ENCODE measurements at regions of chr2 and their contacts with region 1.

Region 1: DNA sequence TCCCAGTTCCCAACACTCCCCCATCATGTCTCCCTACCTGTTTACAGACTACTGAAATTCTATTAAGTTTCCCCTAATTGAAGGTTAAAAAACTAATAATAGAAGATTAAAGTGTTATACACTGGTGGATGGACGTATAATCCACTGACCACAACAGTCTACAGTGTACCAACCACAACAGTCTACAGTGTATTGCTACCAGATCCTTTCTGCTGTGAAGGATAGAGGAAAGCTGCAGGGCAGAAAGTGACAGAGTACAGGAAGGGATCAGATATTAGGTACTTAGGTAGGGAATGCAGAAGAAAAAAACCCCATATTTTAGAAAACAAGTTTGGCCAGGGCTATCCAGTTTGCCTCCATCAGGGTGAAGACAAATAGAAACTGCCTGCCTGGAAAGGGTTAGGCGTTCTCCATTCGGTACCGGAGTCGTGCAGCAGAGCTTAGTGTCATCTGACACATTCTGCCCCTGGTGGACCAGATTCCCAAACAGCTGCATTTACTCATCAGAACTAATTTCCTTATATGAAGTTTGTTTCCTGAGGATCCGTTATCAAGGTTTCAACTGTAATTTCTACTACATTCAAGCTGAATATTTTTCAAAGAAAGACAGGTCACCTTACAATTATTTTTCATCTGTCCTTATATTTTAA is 49.9 kb downstream of the KLF7 start:
- DNase-seq: no peak
- ATAC-seq: no peak
- H3K4me3 ChIP-seq: no peak overlapping the region
- H3K4me3 Mint-ChIP-seq: no peak overlapping the region
- H3K27ac ChIP-seq: no peak overlapping the region
- H3K27ac Mint-ChIP-seq: no peak overlapping the region
- H3K4me1 ChIP-seq: peaks cover 0 to 7% of the 10 kb centered on the region in 2 donors
- H3K4me1 Mint-ChIP-seq: peaks cover 15 to 88% (median 56%) of the 10 kb centered on the region in 7 donors
- H3K27me3 ChIP-seq: no peaks in the 10 kb centered on the region
- H3K27me3 Mint-ChIP-seq: no peaks in the 10 kb centered on the region

Region 2: GRCh38 chr2:206840999-206841398 is 274.8 kb before region 1 on chr2:
- CTCF ChIA-PET with region 1: no interaction called
- POLR2A ChIA-PET with region 1: no interaction called
- intact Hi-C with region 1: no loop called
- DNase-seq: no peak
- ATAC-seq: no peak
- H3K4me3 ChIP-seq: no peak overlapping the region
- H3K4me3 Mint-ChIP-seq: no peak overlapping the region
- H3K27ac ChIP-seq: no peak overlapping the region
- H3K27ac Mint-ChIP-seq: no peak overlapping the region
- H3K4me1 ChIP-seq: no peaks in the 10 kb centered on the region
- H3K4me1 Mint-ChIP-seq: no peaks in the 10 kb centered on the region
- H3K27me3 ChIP-seq: no peaks in the 10 kb centered on the region
- H3K27me3 Mint-ChIP-seq: peaks cover 0 to 10% (median 0%) of the 10 kb centered on the region in 5 donors

Region 3: DNA sequence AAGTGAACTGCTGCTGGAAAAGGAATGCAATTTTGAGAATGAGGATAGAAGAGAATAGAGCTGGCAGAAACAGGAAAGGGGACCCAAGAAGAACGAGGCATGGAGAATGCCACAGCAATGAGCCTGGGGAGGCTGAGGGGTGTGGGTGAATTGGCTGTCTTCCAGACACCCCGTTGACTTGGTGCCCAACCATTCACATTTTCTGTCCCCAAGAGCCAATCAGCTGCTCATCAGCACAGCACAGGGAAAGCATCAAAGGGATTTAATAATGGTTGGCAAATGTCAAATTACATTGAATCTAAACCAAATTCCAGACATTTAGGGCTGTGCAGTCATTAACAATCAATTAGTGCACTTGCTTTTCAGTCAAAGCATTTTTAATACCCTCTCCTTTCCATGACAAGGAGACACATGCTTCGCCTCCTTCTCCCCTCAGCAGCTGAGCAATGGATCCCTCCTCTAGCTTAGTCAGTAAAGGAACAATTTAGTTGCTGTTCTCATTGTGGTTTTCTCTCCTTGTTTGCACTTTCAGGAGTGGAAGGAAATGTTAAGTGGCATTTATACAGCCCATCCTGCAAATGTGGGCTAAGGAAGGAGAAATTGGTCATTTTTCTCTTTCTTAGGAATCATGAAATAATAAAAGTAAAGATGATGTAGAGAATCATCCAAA is 48.9 kb before region 1 on chr2:
- CTCF ChIA-PET with region 1: no interaction called
- POLR2A ChIA-PET with region 1: no interaction called
- intact Hi-C with region 1: no loop called
- DNase-seq: no peak
- ATAC-seq: no peak
- H3K4me3 ChIP-seq: no peak overlapping the region
- H3K4me3 Mint-ChIP-seq: no peak overlapping the region
- H3K27ac ChIP-seq: no peak overlapping the region
- H3K27ac Mint-ChIP-seq: no peak overlapping the region
- H3K4me1 ChIP-seq: no peaks in the 10 kb centered on the region
- H3K4me1 Mint-ChIP-seq: peaks cover 0 to 24% (median 0%) of the 10 kb centered on the region in 7 donors
- H3K27me3 ChIP-seq: no peaks in the 10 kb centered on the region
- H3K27me3 Mint-ChIP-seq: peaks cover 0 to 8% (median 0%) of the 10 kb centered on the region in 5 donors

Region 4: GRCh38 chr2:207097278-207097677 is 18.6 kb before region 1 on chr2:
- CTCF ChIA-PET with region 1: no interaction called
- POLR2A ChIA-PET with region 1: no interaction called
- intact Hi-C with region 1: loop called in 1 of 2 experiments (anchors 2 kb)
- DNase-seq: no peak
- ATAC-seq: no peak
- H3K4me3 ChIP-seq: no peak overlapping the region
- H3K4me3 Mint-ChIP-seq: no peak overlapping the region
- H3K27ac ChIP-seq: no peak overlapping the region
- H3K27ac Mint-ChIP-seq: peak overlapping the region in 4 of 9 donors; percentile 2 to 34 (median 27)
- H3K4me1 ChIP-seq: peaks cover 0 to 2% of the 10 kb centered on the region in 2 donors
- H3K4me1 Mint-ChIP-seq: peaks cover 2 to 62% (median 47%) of the 10 kb centered on the region in 7 donors
- H3K27me3 ChIP-seq: no peaks in the 10 kb centered on the region
- H3K27me3 Mint-ChIP-seq: no peaks in the 10 kb centered on the region

Region 5: DNA sequence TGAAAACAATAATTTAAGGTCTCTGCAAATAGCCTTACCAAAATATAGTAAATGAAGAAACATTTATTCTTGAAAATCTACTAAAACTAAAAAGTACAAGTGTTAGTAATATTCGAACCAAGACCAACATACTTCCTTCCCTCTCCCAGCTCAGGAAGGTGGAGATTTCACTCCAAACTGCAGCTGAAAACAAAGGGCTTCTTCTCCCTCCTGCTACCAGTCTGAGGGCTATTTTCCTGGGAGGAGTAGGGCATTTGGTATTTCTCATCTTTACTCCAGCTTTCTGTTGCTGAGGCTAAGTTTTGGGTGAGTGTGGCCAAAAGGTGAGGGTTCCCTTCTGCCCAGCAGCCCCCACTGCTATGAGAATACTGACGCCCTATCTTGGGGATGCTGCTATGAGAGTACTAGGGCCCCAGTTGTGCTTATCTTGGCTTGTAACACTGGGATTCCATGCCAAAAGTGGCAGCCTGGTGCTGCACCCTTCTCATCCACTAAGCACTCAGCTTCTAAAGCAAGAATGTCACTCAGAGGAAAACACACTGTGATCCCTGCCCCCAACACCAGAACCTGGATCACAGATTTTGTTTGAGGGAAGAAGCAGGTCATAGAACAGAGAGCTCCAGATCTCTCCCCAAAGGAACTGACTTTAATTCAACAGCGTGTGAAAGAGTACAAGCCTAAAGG is 180.6 kb after region 1 on chr2:
- CTCF ChIA-PET with region 1: no interaction called
- POLR2A ChIA-PET with region 1: no interaction called
- intact Hi-C with region 1: no loop called
- DNase-seq: no peak
- ATAC-seq: no peak
- H3K4me3 ChIP-seq: no peak overlapping the region
- H3K4me3 Mint-ChIP-seq: no peak overlapping the region
- H3K27ac ChIP-seq: no peak overlapping the region
- H3K27ac Mint-ChIP-seq: no peak overlapping the region
- H3K4me1 ChIP-seq: no peaks in the 10 kb centered on the region
- H3K4me1 Mint-ChIP-seq: peaks cover 0 to 2% (median 0%) of the 10 kb centered on the region in 7 donors
- H3K27me3 ChIP-seq: no peaks in the 10 kb centered on the region
- H3K27me3 Mint-ChIP-seq: peaks cover 0 to 5% (median 0%) of the 10 kb centered on the region in 5 donors